B cell (primary cell): ENCODE measurements at regions of chr16 and their contacts with region 1.

Region 1: GRCh38 chr16:67816240-67817031 is 9.7 kb downstream of the TSNAXIP1 start:
- DNase-seq: peak; percentile 92
- ATAC-seq: peak; percentile 99
- H3K4me3 ChIP-seq: no peak overlapping the region
- H3K4me3 Mint-ChIP-seq: peak overlapping the region; percentile 65
- H3K27ac ChIP-seq: no peak overlapping the region
- H3K27ac Mint-ChIP-seq: peak overlapping the region; percentile 59
- H3K4me1 ChIP-seq: peaks cover 0 to 7% of the 10 kb centered on the region in 2 donors
- H3K4me1 Mint-ChIP-seq: peaks cover 6% of the 10 kb centered on the region
- H3K27me3 ChIP-seq: no peaks in the 10 kb centered on the region
- H3K27me3 Mint-ChIP-seq: no peaks in the 10 kb centered on the region
- CTCF ChIP-seq: peak; percentile 100

Region 2: DNA sequence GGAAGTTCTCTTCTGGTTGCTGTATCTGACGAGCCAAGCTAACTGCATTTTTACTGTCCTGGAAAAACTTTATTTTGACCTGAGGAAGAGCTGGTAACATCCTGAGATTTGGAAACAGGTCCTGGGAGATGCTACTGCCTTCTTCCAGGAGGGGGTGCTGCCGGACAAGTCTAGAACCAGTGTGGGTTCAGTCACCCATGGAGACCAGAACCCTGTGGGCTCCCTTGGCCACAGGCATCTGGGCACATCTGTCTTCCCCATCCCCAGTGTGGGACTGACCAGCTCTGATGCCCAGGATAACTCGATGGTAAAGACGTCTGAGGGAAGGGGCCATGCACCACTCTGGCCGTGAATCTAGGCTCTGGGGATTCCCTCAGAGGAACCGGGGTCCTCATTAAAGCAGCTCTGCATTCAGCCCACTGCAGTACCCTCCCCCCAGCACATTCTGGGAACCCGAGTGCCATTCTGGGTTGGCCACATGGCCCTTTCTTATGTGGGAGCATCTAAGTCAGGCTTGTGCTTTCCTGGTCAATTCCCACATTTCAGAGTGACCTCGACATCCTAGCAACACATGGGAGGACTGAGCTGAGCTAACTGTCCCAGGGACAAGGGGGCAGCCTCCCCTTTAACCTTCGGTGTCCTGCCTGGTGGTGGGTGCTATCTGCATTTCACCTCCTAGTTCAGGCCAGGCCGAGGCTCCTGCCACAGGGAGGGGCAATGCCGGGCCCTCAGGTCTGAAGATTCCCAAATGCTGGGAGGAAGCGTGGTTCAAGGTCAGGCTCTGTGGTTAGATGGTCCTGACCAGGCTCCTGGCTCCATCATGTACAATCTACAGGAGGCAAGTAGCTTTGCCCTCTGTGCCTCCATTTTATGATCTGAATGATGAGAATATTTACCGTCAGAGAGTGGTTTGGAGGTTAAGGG is 143.4 kb before region 1 on chr16:
- CTCF ChIA-PET with region 1: interaction called, 27 read pairs
- POLR2A ChIA-PET with region 1: no interaction called
- intact Hi-C with region 1: loop called (anchors 1 kb)
- DNase-seq: peak; percentile 77
- ATAC-seq: peak; percentile 23
- H3K4me3 ChIP-seq: no peak overlapping the region
- H3K4me3 Mint-ChIP-seq: no peak overlapping the region
- H3K27ac ChIP-seq: no peak overlapping the region
- H3K27ac Mint-ChIP-seq: peak overlapping the region; percentile 41
- H3K4me1 ChIP-seq: peaks cover 23 to 37% of the 10 kb centered on the region in 2 donors
- H3K4me1 Mint-ChIP-seq: peaks cover 39% of the 10 kb centered on the region
- H3K27me3 ChIP-seq: no peaks in the 10 kb centered on the region
- H3K27me3 Mint-ChIP-seq: no peaks in the 10 kb centered on the region
- CTCF ChIP-seq: peak; percentile 81

Region 3: GRCh38 chr16:67800338-67800926 is 16.0 kb before region 1 on chr16:
- CTCF ChIA-PET with region 1: interaction called, 24 read pairs
- POLR2A ChIA-PET with region 1: no interaction called
- intact Hi-C with region 1: no loop called
- DNase-seq: peak; percentile 20
- ATAC-seq: no peak
- H3K4me3 ChIP-seq: no peak overlapping the region
- H3K4me3 Mint-ChIP-seq: no peak overlapping the region
- H3K27ac ChIP-seq: no peak overlapping the region
- H3K27ac Mint-ChIP-seq: peak overlapping the region; percentile 50
- H3K4me1 ChIP-seq: peaks cover 52 to 53% of the 10 kb centered on the region in 2 donors
- H3K4me1 Mint-ChIP-seq: peaks cover 70% of the 10 kb centered on the region
- H3K27me3 ChIP-seq: no peaks in the 10 kb centered on the region
- H3K27me3 Mint-ChIP-seq: no peaks in the 10 kb centered on the region
- CTCF ChIP-seq: no peak

Region 4: DNA sequence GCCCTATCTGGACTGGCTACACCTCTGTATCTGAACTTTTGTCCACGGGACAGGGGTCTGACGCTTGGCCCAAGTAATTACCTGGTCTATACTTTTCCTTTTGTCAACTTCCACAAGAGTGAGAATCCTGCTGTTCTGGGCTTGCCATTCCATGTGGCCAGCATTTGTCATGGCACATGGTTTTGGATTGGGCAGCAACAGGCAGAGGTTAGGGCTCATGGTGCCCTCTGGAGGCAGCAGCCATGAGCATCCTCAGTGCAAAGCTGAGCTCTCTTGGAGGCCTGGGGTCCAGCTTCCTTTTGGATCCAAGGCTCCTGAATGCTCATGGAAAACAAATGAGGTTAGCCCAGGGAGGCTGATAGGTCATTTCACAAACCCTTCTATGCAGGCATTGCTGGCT is 48.9 kb after region 1 on chr16:
- CTCF ChIA-PET with region 1: interaction called, 23 read pairs
- POLR2A ChIA-PET with region 1: no interaction called
- intact Hi-C with region 1: loop called (anchors 2 kb)
- DNase-seq: no peak
- ATAC-seq: peak; percentile 33
- H3K4me3 ChIP-seq: no peak overlapping the region
- H3K4me3 Mint-ChIP-seq: no peak overlapping the region
- H3K27ac ChIP-seq: no peak overlapping the region
- H3K27ac Mint-ChIP-seq: no peak overlapping the region
- H3K4me1 ChIP-seq: no peaks in the 10 kb centered on the region
- H3K4me1 Mint-ChIP-seq: peaks cover 7% of the 10 kb centered on the region
- H3K27me3 ChIP-seq: no peaks in the 10 kb centered on the region
- H3K27me3 Mint-ChIP-seq: no peaks in the 10 kb centered on the region
- CTCF ChIP-seq: no peak

Region 5: DNA sequence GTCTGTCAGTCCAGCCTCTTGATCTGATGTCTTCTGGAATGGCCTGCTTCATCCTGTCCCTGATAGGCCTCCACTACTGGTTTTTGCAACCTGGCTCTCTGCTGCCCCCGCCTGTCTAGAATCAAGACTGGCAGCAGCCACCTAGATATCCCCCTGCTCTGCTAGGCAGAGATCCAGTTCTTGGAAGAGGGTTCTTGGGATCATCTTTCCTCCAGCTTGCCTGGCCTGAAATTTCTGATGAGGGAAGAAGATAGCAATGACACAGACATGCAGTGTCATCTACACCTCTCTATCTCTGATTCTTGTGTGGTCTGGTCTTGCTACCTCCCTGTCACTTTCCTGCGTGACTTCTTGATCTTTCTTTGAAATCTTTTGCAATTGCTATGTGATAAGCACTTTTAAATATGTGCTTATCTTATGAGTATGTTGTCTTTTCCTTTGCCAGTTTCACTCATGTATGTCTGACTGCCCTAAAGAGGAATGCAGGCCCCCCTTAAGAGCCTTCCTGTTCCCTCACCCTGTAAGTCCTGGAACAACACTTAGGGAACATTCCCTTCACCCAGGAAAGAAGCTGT is 248.4 kb after region 1 on chr16:
- CTCF ChIA-PET with region 1: interaction called, 13 read pairs
- POLR2A ChIA-PET with region 1: interaction called, 8 read pairs
- intact Hi-C with region 1: loop called (anchors 1 kb)
- DNase-seq: peak; percentile 74
- ATAC-seq: peak; percentile 93
- H3K4me3 ChIP-seq: no peak overlapping the region
- H3K4me3 Mint-ChIP-seq: no peak overlapping the region
- H3K27ac ChIP-seq: no peak overlapping the region
- H3K27ac Mint-ChIP-seq: peak overlapping the region; percentile 33
- H3K4me1 ChIP-seq: peaks cover 9 to 22% of the 10 kb centered on the region in 2 donors
- H3K4me1 Mint-ChIP-seq: peaks cover 23% of the 10 kb centered on the region
- H3K27me3 ChIP-seq: no peaks in the 10 kb centered on the region
- H3K27me3 Mint-ChIP-seq: no peaks in the 10 kb centered on the region
- CTCF ChIP-seq: peak; percentile 90